B cell (primary cell): ENCODE measurements at regions of chr3 and their contacts with region 1.

Region 1: GRCh38 chr3:183680061-183680460 is 17.5 kb upstream of the YEATS2 start:
- DNase-seq: no peak
- ATAC-seq: no peak
- H3K4me3 ChIP-seq: no peak overlapping the region
- H3K4me3 Mint-ChIP-seq: no peak overlapping the region
- H3K27ac ChIP-seq: no peak overlapping the region
- H3K27ac Mint-ChIP-seq: no peak overlapping the region
- H3K4me1 ChIP-seq: no peaks in the 10 kb centered on the region
- H3K4me1 Mint-ChIP-seq: no peaks in the 10 kb centered on the region
- H3K27me3 ChIP-seq: no peaks in the 10 kb centered on the region
- H3K27me3 Mint-ChIP-seq: no peaks in the 10 kb centered on the region
- CTCF ChIP-seq: no peak

Region 2: DNA sequence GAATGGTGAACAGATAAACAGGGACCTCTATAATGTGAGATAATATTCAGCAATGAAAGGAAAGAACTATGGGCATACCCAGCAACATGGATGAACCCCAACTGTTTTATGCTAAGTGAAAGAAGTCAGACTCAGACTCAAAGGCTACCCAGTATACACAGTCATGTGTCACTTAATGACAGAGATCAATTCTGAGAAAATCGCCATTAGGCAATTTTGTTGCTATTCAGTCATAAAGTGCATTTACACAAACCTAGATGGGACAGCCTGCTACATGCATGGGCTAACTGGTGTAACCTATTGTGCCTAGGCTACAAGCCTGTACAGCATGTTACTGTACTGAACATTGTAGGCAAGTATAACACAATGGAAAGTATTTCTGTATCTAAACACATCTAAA is 350.5 kb before region 1 on chr3:
- CTCF ChIA-PET with region 1: no interaction called
- POLR2A ChIA-PET with region 1: interaction called, 14 read pairs
- intact Hi-C with region 1: no loop called
- DNase-seq: no peak
- ATAC-seq: no peak
- H3K4me3 ChIP-seq: no peak overlapping the region
- H3K4me3 Mint-ChIP-seq: no peak overlapping the region
- H3K27ac ChIP-seq: no peak overlapping the region
- H3K27ac Mint-ChIP-seq: no peak overlapping the region
- H3K4me1 ChIP-seq: no peaks in the 10 kb centered on the region
- H3K4me1 Mint-ChIP-seq: no peaks in the 10 kb centered on the region
- H3K27me3 ChIP-seq: no peaks in the 10 kb centered on the region
- H3K27me3 Mint-ChIP-seq: peaks cover 4% of the 10 kb centered on the region
- CTCF ChIP-seq: no peak

Region 3: GRCh38 chr3:183766745-183767606 is 86.9 kb after region 1 on chr3:
- CTCF ChIA-PET with region 1: no interaction called
- POLR2A ChIA-PET with region 1: no interaction called
- intact Hi-C with region 1: no loop called
- DNase-seq: peak; percentile 78
- ATAC-seq: peak; percentile 79
- H3K4me3 ChIP-seq: no peak overlapping the region
- H3K4me3 Mint-ChIP-seq: no peak overlapping the region
- H3K27ac ChIP-seq: no peak overlapping the region
- H3K27ac Mint-ChIP-seq: no peak overlapping the region
- H3K4me1 ChIP-seq: peaks cover 9% of the 10 kb centered on the region in 2 donors
- H3K4me1 Mint-ChIP-seq: peaks cover 11% of the 10 kb centered on the region
- H3K27me3 ChIP-seq: no peaks in the 10 kb centered on the region
- H3K27me3 Mint-ChIP-seq: no peaks in the 10 kb centered on the region
- CTCF ChIP-seq: peak; percentile 83

Region 4: GRCh38 chr3:183854318-183855035 is 174.4 kb after region 1 on chr3:
- CTCF ChIA-PET with region 1: no interaction called
- POLR2A ChIA-PET with region 1: no interaction called
- intact Hi-C with region 1: no loop called
- DNase-seq: no peak
- ATAC-seq: no peak
- H3K4me3 ChIP-seq: no peak overlapping the region
- H3K4me3 Mint-ChIP-seq: no peak overlapping the region
- H3K27ac ChIP-seq: no peak overlapping the region
- H3K27ac Mint-ChIP-seq: no peak overlapping the region
- H3K4me1 ChIP-seq: no peaks in the 10 kb centered on the region
- H3K4me1 Mint-ChIP-seq: peaks cover 4% of the 10 kb centered on the region
- H3K27me3 ChIP-seq: no peaks in the 10 kb centered on the region
- H3K27me3 Mint-ChIP-seq: no peaks in the 10 kb centered on the region
- CTCF ChIP-seq: no peak